ENCODE measurements at regions of chr12 and their contacts with region 1.

Region 1: DNA sequence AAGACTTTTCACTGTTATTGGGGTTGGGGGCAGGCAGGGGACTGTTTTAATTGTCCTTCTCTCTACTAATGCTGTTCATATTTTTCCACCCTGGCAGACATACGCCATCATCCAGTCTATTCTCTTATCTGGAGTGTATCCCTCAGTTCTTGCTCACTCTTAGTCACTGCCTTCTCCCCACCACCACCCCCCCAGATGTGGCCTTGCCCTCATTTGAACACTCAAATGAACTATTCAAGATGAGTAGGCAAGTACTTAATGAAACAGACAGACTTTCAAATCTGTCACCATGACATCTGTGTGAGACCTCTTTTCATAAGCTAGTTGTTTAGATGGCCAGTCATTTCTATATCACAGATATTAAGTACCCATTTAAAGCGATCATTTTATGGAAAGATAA is 10.1 kb downstream of the NUDT4 start:
- DNase-seq: peak; percentile 83
- H3K4me3 Mint-ChIP-seq: no peak overlapping the region
- H3K27ac Mint-ChIP-seq: peak overlapping the region; percentile 67
- H3K4me1 Mint-ChIP-seq: peaks cover 62% of the 10 kb centered on the region
- H3K27me3 Mint-ChIP-seq: no peaks in the 10 kb centered on the region

Region 2: DNA sequence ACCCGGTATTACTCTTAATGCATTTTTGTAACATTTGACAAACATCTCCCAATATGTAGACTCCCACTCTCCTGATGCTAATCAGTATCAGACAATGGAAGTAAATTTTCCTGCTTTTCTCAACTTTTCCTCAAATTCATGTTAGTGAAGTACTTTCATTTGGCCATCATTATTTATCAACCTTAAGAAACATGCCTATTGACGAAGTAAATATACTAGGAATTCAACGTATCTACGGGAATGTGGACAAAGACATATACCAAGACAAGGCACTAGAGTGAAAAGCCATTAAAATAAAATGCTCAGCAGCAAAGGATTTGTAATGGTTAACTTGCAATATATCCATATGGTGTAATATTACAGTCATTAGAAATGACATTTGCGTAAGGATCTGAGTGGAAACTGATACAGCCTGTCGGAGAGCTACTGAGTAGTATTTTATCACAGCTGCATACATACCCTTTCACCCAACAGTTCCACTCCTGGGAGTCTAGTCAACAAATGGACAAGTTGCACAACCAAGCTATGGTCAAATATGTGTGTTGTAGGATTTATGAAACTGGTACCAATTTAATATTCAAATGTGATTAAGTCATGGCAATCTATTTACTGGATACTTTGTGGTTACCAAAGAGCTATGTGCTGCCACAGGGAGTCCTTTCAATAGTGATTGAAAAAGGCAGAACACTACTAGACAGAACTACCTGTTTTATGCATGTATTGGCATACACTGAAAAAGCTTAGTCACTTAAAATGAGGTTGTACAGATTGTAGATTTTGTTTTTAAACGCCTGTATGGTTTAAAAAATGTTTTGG is 16.4 kb after region 1 on chr12:
- CTCF ChIA-PET with region 1: no interaction called
- POLR2A ChIA-PET with region 1: interaction called, 5 read pairs
- intact Hi-C with region 1: loop called (anchors 2 kb)
- DNase-seq: no peak
- H3K4me3 Mint-ChIP-seq: no peak overlapping the region
- H3K27ac Mint-ChIP-seq: peak overlapping the region; percentile 36
- H3K4me1 Mint-ChIP-seq: peaks cover 44% of the 10 kb centered on the region
- H3K27me3 Mint-ChIP-seq: no peaks in the 10 kb centered on the region

Measured in activated CD4-positive, alpha-beta memory T cell treated with anti-CD3 and anti-CD28 coated beads for 36 hours (primary cell).